ENCODE measurements at regions of chr3 and their contacts with region 1.

Region 1: GRCh38 chr3:52385157-52385556 is 59.7 kb downstream of the SEMA3G start:
- DNase-seq: peak; percentile 88
- ATAC-seq: peak; percentile 94
- H3K4me3 Mint-ChIP-seq: no peak overlapping the region
- H3K27ac Mint-ChIP-seq: peak overlapping the region; percentile 70; the same call in 1 of the 2 replicates
- H3K4me1 Mint-ChIP-seq: peaks cover 5% of the 10 kb centered on the region; the same call in 1 of the 2 replicates
- H3K27me3 Mint-ChIP-seq: no peaks in the 10 kb centered on the region
- CTCF ChIP-seq: peak; percentile 65

Region 2: DNA sequence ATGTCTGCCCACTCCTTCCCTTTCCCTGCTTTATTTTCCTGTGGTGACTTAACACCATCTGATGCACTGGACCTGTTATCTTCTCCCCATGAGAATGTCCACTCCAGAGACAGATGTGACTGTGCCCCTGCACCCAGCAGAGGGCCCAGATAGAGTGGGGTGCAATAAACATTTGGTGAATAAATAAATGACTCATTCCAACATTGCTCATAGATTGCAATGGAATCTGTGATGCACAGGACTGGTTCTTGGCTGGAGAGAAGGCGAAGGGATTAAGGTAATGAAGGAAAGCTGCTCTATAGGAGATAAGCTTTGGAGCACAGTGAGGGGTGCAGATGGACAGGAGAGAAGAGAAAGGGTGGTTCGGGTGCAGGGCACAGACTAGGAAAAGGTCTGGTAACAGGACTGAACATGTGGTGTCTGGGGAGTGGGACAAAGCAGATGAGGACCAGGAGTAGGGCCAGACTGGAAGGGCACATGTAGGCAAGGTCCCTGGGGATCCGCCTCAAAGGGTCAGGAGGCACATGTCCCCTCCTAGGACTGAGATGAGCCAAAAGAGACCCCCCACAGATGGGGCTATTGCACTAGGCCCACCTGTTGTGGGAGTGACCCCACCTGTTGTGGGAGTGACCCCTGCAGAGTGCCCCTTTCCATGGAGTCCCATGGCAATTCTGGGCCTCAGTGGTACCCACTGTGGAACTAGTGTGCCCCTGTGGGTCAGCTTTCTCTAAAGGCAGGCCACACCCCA is 213.5 kb before region 1 on chr3:
- CTCF ChIA-PET with region 1: interaction called, 11 read pairs
- POLR2A ChIA-PET with region 1: no interaction called
- DNase-seq: no peak
- ATAC-seq: no peak
- H3K4me3 Mint-ChIP-seq: no peak overlapping the region
- H3K27ac Mint-ChIP-seq: 0 out of 2 replicates have a peak overlapping the region, but pooled peaks have one; percentile 1
- H3K4me1 Mint-ChIP-seq: peaks cover 15% of the 10 kb centered on the region
- H3K27me3 Mint-ChIP-seq: no peaks in the 10 kb centered on the region
- CTCF ChIP-seq: no peak

Region 3: GRCh38 chr3:52231502-52232293 is 153.5 kb before region 1 on chr3:
- CTCF ChIA-PET with region 1: interaction called, 29 read pairs
- POLR2A ChIA-PET with region 1: no interaction called
- DNase-seq: peak; percentile 85
- ATAC-seq: peak; percentile 75
- H3K4me3 Mint-ChIP-seq: no peak overlapping the region
- H3K27ac Mint-ChIP-seq: no peak overlapping the region; the same call in 1 of the 2 replicates
- H3K4me1 Mint-ChIP-seq: peaks cover 9% of the 10 kb centered on the region
- H3K27me3 Mint-ChIP-seq: no peaks in the 10 kb centered on the region
- CTCF ChIP-seq: peak; percentile 91

Region 4: GRCh38 chr3:52278510-52279069 is 106.6 kb before region 1 on chr3 and contains the start of gene WDR82:
- CTCF ChIA-PET with region 1: interaction called, 24 read pairs
- POLR2A ChIA-PET with region 1: interaction called, 4 read pairs
- DNase-seq: peak; percentile 98
- ATAC-seq: peak; percentile 93
- H3K4me3 Mint-ChIP-seq: peak within 1 kb of the TSS; percentile 94
- H3K27ac Mint-ChIP-seq: peak within 1 kb of the TSS; percentile 100
- H3K4me1 Mint-ChIP-seq: peaks cover 34% of the 10 kb centered on the region
- H3K27me3 Mint-ChIP-seq: no peaks in the 10 kb centered on the region
- CTCF ChIP-seq: 0 out of 2 replicates have a peak, but pooled peaks have one; percentile 32
- total RNA-seq, gene WDR82: 64.6 to 69.7 TPM (median 64.9 TPM) in 3 replicates

Region 5: GRCh38 chr3:52317208-52318000 is 67.8 kb before region 1 on chr3:
- CTCF ChIA-PET with region 1: interaction called, 16 read pairs
- POLR2A ChIA-PET with region 1: interaction called, 4 read pairs
- DNase-seq: peak; percentile 93
- ATAC-seq: peak; percentile 97
- H3K4me3 Mint-ChIP-seq: peak overlapping the region; percentile 67
- H3K27ac Mint-ChIP-seq: no peak overlapping the region; the same call in 1 of the 2 replicates
- H3K4me1 Mint-ChIP-seq: peaks cover 6% of the 10 kb centered on the region; the same call in 1 of the 2 replicates
- H3K27me3 Mint-ChIP-seq: peaks cover 27% of the 10 kb centered on the region
- CTCF ChIP-seq: no peak

Region 6: GRCh38 chr3:52357151-52358080 is 27.7 kb before region 1 on chr3:
- CTCF ChIA-PET with region 1: interaction called, 31 read pairs
- POLR2A ChIA-PET with region 1: no interaction called
- DNase-seq: no peak
- ATAC-seq: no peak
- H3K4me3 Mint-ChIP-seq: no peak overlapping the region
- H3K27ac Mint-ChIP-seq: no peak overlapping the region
- H3K4me1 Mint-ChIP-seq: no peaks in the 10 kb centered on the region
- H3K27me3 Mint-ChIP-seq: no peaks in the 10 kb centered on the region
- CTCF ChIP-seq: no peak

Region 7: DNA sequence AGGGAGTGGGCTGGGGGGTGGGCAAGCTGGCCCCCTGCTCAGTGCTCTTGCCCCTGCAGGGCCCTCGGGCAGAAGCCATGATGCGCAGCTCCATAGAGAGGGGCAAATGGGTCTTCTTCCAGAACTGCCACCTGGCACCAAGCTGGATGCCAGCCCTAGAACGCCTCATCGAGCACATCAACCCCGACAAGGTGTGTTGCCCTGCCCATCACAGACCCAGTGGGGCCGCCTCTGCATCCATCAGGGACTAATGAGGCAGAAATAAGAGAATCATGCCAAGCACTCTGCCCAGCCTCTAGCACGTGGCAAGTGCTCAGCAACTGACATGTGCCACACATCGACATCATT is 10.3 kb after region 1 on chr3:
- CTCF ChIA-PET with region 1: interaction called, 40 read pairs
- POLR2A ChIA-PET with region 1: interaction called, 4 read pairs
- DNase-seq: no peak
- ATAC-seq: no peak
- H3K4me3 Mint-ChIP-seq: no peak overlapping the region
- H3K27ac Mint-ChIP-seq: no peak overlapping the region
- H3K4me1 Mint-ChIP-seq: no peaks in the 10 kb centered on the region
- H3K27me3 Mint-ChIP-seq: peaks cover 5% of the 10 kb centered on the region; the same call in 1 of the 2 replicates
- CTCF ChIP-seq: no peak

Measured in WTC11 (cell line).